CD4-positive, alpha-beta T cell (primary cell): ENCODE measurements at regions of chr1 and their contacts with region 1.

Region 1: DNA sequence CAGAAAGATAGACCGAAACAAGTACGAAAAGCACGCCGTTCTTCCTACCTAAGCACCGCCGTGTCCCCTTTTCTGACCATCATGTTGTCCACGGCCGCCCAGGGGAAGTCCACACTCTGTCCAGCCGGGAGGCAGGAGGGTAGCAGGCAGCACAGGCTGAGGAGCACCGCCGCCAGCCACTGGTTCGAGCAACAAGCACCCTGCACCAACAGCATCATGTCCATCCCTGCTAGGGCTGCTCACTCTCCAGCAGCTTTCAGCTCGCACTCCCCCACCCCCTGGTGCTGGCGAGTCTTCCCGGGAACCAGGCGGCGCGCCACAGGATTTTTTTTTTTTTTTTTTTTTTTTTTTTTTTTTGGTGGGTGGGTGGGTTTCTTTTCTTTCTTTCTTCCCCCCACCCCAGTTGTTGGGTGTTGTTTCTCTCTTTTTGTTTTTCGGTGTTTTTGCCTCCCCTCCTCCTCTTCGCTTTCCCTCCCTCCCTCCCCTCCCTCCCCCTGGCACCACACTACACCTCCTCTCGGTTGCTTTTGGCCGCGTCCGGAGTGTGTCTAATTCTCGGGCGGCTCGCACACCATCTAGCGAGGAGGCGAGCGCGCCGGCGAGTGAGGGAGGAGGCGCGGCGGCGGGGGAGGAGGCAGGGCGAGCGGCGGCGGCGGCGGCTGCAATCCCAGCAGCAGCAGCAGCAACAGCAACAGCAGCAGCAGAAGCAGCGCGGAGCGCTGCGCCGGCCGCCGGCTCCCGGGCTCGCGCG is at the start of gene NEGR1:
- DNase-seq: peak in 10 of 14 experiments; percentile 12 to 79 (median 56)
- ATAC-seq: peak; percentile 70
- H3K4me3 ChIP-seq: peak within 1 kb of the TSS; percentile 67
- H3K4me3 Mint-ChIP-seq: peak within 1 kb of the TSS; percentile 70
- H3K27ac ChIP-seq: peak within 1 kb of the TSS in 1 of 2 donors; percentile 9
- H3K27ac Mint-ChIP-seq: peak within 1 kb of the TSS; percentile 61
- H3K4me1 ChIP-seq: peaks cover 10% of the 10 kb centered on the region
- H3K4me1 Mint-ChIP-seq: peaks cover 16% of the 10 kb centered on the region
- H3K27me3 ChIP-seq: peaks cover 9 to 14% of the 10 kb centered on the region in 2 experiments
- H3K27me3 Mint-ChIP-seq: peaks cover 21% of the 10 kb centered on the region
- CTCF ChIP-seq: no peak
- total RNA-seq, gene NEGR1: 0.03 TPM

Region 2: DNA sequence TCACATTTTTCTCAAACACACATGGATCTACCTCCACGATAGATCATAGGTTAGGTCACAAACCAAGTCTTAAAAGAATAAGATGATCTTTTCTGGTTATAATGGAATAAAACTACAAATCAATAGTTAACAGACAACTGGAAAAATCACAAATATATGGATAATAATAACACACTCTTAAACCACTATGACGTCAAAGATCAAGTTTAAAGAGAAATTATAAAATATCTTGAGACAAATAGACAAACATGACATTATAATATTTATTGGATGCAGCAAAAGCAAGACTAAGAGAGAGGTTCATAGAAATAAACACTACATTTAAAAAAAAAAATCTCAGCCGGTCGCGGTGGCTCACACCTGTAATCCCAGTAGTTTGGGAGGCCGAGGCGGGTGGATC is 77.2 kb after region 1 on chr1:
- CTCF ChIA-PET with region 1: no interaction called
- POLR2A ChIA-PET with region 1: no interaction called
- intact Hi-C with region 1: loop called in 1 of 2 experiments (anchors 5 kb)
- DNase-seq: no peak
- ATAC-seq: no peak
- H3K4me3 ChIP-seq: no peak overlapping the region
- H3K4me3 Mint-ChIP-seq: no peak overlapping the region
- H3K27ac ChIP-seq: no peak overlapping the region
- H3K27ac Mint-ChIP-seq: no peak overlapping the region
- H3K4me1 ChIP-seq: no peaks in the 10 kb centered on the region
- H3K4me1 Mint-ChIP-seq: no peaks in the 10 kb centered on the region
- H3K27me3 ChIP-seq: no peaks in the 10 kb centered on the region
- H3K27me3 Mint-ChIP-seq: no peaks in the 10 kb centered on the region
- CTCF ChIP-seq: no peak